ENCODE measurements at regions of chr14 and their contacts with region 1.

Region 1: GRCh38 chr14:22491683-22492621 is 97.1 kb downstream of the DAD1 start:
- DNase-seq: no peak
- ATAC-seq: no peak
- H3K4me3 Mint-ChIP-seq: peak overlapping the region; percentile 86
- H3K27ac Mint-ChIP-seq: peak overlapping the region; percentile 93
- H3K4me1 Mint-ChIP-seq: peaks cover 8% of the 10 kb centered on the region
- H3K27me3 Mint-ChIP-seq: no peaks in the 10 kb centered on the region

Region 2: DNA sequence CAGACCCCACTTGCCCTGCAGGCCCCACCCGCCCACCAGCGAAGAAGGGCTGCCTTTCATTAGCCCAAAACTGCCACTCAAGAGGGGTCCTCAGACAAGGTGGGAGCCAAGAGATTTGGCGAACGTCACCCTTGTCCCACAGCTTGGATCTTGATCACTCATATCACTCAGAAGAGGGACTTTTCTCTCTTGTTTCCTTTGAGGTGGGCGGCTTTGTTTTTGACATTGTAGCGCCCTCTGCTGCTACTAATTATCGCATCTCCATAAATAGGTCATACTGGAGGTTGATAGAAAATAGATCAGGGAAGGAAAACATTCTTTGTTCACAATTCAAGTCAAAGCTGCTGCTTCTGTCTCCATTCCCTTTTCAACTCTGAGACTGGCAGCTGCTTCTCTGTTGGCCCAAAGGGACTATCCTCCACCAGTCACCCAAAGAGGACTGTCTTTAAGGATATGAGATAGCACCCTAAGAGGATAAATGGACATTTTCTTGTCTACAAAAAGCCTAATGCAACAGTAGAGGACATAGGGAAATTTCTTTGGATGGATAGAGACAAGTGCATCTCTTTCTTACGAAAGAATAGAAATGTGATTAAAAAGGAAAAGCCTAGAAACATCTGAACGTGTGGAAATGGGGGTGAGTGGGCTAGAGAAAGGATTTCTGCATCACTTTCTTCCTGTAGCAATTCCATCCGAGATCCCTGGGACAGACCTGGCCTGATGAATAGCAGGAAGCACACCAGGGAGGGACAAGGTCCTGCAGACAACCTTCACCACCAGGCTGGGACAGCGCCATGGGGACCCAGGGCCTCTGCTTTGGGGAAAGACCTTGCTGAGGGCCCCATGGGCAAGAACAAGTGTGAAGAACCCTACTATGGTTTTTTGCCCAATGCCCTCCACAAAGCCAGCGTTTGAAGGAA is 18.8 kb before region 1 on chr14:
- CTCF ChIA-PET with region 1: no interaction called
- POLR2A ChIA-PET with region 1: no interaction called
- DNase-seq: no peak
- ATAC-seq: no peak
- H3K4me3 Mint-ChIP-seq: no peak overlapping the region
- H3K27ac Mint-ChIP-seq: no peak overlapping the region
- H3K4me1 Mint-ChIP-seq: no peaks in the 10 kb centered on the region
- H3K27me3 Mint-ChIP-seq: no peaks in the 10 kb centered on the region

Region 3: DNA sequence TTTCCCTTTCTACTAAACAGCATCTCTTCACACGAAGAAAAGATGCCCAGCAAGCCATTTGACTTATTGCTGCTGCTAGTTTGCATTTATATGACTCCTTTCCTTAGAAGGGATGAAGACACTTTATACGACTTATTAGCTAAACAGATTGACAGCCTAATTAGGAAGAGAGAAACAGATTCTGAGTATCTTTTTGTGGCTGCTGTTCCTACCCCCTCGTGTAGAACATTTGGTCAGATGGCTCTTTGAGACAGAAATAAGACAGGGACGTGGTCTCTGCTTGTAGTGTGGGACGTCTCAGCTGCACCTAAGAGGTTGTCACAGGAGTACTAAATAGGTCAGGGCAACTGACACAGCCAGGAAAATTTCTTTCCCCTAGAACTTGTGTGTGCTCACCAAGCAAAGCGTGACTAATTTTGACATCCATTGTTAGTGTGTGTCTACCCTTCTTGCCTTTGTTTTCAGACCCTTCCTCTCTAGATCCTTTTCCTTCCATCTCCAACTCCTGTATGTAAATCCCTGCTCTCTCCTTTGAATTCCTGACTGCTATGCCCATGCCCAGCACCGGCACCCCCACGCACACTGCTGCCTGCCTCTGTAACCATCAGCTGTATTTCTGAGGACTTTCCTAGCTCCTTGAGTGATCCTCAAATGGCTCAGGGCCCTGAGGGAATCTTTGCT is 13.9 kb after region 1 on chr14:
- CTCF ChIA-PET with region 1: interaction called, 6 read pairs
- POLR2A ChIA-PET with region 1: interaction called, 381 read pairs
- DNase-seq: no peak
- ATAC-seq: peak; percentile 31
- H3K4me3 Mint-ChIP-seq: peak overlapping the region; percentile 84
- H3K27ac Mint-ChIP-seq: peak overlapping the region; percentile 97
- H3K4me1 Mint-ChIP-seq: peaks cover 59% of the 10 kb centered on the region
- H3K27me3 Mint-ChIP-seq: no peaks in the 10 kb centered on the region

Region 4: DNA sequence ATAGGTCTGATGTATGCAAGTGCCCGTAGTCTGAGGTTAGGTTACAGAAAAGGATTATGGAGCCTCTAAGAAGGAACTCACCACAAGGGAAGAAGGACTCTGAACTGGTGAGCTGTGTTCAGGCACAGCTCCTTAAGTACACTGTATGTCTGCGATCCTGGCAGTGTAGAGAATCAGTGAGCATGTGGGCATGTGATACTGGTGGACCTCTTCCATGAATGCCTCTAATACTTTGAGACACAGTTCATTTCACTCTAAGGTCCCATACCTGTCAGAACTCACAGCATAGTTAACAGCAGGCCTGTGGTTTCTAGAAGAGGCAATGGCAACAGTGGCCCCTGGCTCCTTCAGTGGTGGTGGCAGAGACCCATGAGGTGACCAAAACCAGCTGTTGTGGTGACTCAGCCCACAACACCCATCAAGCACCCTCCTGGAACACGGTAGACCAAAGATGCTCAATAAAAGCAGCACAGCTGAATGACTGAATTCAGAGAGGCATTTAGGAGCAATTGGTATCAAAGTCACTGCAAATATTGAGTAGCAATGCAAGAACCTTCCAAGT is 159.1 kb after region 1 on chr14:
- CTCF ChIA-PET with region 1: no interaction called
- POLR2A ChIA-PET with region 1: no interaction called
- DNase-seq: no peak
- ATAC-seq: peak; percentile 38
- H3K4me3 Mint-ChIP-seq: no peak overlapping the region
- H3K27ac Mint-ChIP-seq: no peak overlapping the region
- H3K4me1 Mint-ChIP-seq: peaks cover 12% of the 10 kb centered on the region
- H3K27me3 Mint-ChIP-seq: peaks cover 2% of the 10 kb centered on the region

Measured in activated CD8-positive, alpha-beta T cell treated with anti-CD3 and anti-CD28 coated beads, Interleukin-2, amount 10 ng/mL, durations not matched to agents 7 days and 5 days (primary cell).